Prostate gland (tissue), 2 donors: ENCODE measurements at regions of chr9 and their contacts with region 1.

Region 1: DNA sequence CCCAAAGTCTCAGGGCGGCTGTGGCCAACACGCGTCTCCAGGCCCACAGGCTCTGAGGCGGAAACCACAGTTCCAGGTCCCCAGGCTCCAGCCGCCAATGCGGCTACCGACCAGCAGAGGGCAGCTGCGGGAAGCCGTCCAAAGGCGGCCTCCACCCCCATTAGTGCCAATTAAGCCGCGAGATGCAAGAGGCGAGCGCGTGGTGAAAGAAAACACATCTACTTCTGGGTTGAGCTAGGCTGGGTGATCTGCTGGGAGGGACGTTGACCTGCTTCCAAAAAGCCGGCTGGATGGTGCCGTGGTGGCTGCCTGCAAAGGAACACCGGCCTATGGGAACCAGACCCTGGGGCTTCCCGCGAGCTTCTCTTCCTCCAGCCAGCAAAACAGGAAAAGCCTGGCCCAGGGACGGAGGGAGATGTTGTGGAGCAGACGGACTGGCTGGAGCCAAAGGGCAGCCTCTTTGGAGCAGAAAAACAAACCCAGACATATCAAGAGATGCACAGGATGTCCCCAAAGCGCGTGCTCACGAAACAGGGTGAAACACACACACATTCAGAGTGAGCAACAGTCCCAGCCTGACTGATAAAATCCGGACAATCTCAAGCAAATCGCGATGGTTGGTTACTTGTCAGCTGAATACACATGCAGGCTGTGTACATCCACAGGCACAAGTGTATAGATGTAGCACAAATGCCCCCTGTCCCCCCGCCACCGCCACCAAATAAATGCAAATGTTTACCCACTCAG is 187.1 kb upstream of the BRINP1 start:
- DNase-seq: peak; percentile 50
- H3K4me3 ChIP-seq: peak overlapping the region in 1 of 2 donors; percentile 21
- H3K27ac ChIP-seq: peak overlapping the region; percentile 13 to 17
- H3K4me1 ChIP-seq: peaks cover 5% of the 10 kb centered on the region
- H3K27me3 ChIP-seq: no peaks in the 10 kb centered on the region
- CTCF ChIP-seq: peak; percentile 82 to 88 (median 84)
- POLR2A ChIP-seq: no peak

Region 2: DNA sequence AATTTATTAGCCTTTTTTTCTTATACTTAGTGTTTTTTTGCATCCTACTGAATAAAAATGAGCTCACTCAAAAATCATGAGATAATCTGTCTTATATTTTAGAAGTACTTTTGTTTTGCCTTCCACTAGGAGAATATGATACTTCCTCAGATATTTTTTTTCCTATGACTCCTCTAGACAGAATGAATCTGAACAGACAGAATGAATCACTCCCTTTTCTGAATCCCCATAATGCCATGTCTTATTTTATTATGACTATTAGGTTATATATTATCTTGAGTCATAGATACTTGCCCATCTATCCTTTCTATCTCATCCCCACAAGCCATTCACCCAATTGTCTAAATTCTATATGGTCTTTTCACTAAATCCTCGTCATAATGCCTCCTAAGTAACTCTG is 321.7 kb before region 1 on chr9:
- intact Hi-C with region 1: no loop called
- DNase-seq: no peak
- H3K4me3 ChIP-seq: no peak overlapping the region
- H3K27ac ChIP-seq: no peak overlapping the region
- H3K4me1 ChIP-seq: no peaks in the 10 kb centered on the region
- H3K27me3 ChIP-seq: no peaks in the 10 kb centered on the region
- CTCF ChIP-seq: no peak
- POLR2A ChIP-seq: no peak

Region 3: DNA sequence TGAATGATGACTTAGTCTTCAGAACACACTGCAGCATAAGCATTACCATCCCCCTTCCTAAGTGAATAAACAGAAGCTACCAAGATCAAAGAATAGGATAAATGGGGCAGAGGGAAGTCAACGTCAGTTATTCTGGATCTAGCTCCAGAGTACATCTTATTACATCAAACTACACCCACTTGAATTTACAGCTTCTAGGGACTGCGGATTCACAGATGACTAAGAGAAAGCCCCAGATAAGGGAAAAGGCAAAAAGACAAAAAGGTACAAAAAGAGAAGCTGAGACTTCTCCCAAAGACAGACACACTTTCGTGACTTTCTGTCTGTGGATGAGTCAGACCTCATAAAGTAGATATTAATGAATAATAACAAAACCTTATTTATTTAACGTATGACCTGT is 270.8 kb after region 1 on chr9:
- intact Hi-C with region 1: loop called (anchors 10 kb)
- DNase-seq: no peak
- H3K4me3 ChIP-seq: no peak overlapping the region
- H3K27ac ChIP-seq: no peak overlapping the region
- H3K4me1 ChIP-seq: no peaks in the 10 kb centered on the region
- H3K27me3 ChIP-seq: no peaks in the 10 kb centered on the region
- CTCF ChIP-seq: no peak
- POLR2A ChIP-seq: no peak

Region 4: DNA sequence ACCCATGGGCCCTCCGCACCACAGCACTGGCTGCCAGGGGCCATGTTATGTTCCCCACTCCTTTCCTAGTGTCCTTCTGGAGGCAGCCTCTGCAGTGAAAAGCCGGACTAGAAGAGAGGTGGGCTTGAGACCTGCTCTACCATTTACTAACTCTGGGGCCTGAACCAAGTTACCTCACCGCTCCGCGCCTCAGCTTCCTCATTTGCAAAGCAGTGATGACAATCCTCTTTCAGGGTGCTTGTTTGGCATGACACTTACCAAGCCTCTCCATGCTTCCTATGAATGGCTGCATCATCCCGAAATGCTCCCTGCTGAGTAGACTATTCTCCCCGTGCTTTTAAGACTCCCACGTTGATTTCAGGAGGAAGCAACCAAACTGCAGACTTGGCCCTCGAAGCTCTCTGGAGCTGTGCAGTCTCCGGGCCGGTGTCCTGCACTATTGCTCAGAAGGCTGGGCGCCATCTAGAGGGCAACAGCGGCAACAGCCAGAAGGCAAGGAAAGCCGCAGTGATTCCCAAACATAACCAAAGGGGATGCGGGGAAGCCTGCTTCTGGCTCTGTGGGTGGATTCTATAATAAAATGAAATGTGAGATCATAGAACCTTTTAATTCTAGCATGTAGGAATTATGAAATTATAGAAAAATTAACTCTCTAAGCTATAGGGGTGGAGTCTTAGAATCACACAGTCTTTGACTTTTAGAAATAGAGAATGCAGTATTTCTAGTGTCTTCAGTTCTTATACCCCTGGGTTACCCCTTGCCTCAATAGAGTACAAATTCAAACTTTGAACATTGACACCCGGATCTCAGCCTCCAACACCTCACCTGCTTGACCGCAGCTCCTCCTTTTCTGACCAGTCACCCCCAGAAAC is 412.8 kb after region 1 on chr9:
- intact Hi-C with region 1: loop called (anchors 2 kb)
- DNase-seq: peak; percentile 75
- H3K4me3 ChIP-seq: no peak overlapping the region
- H3K27ac ChIP-seq: no peak overlapping the region
- H3K4me1 ChIP-seq: peaks cover 5% of the 10 kb centered on the region
- H3K27me3 ChIP-seq: no peaks in the 10 kb centered on the region
- CTCF ChIP-seq: peak; percentile 74 to 84 (median 80)
- POLR2A ChIP-seq: no peak

Region 5: DNA sequence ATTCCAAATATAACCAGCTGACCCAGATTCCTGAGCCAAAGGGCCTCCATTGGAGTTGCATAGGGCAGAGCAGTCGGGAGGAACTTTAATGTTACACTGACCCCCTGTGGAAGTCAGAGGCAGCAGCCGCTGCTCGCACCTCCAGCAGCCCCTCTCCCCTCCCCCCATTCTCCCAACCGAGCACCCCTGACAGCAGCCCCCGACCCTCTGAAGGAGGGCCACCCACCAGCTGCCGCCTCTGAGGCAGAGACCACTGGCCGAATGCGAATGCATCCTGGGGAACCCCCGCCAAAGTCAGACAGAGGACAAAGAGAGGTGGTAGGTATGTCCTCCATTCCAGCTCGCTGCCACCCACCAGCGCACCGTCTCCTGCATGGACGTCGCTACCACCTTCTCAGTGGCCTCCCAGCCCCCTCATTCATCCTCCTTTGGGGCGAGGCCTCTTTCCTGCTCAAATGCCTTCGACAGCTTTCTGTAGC is 792.7 kb after region 1 on chr9:
- intact Hi-C with region 1: loop called (anchors 10 kb)
- DNase-seq: peak; percentile 11
- H3K4me3 ChIP-seq: no peak overlapping the region
- H3K27ac ChIP-seq: no peak overlapping the region
- H3K4me1 ChIP-seq: peaks cover 7% of the 10 kb centered on the region
- H3K27me3 ChIP-seq: no peaks in the 10 kb centered on the region
- CTCF ChIP-seq: peak in 3 of 4 experiments; percentile 47 to 62 (median 58)
- POLR2A ChIP-seq: no peak

Region 6: DNA sequence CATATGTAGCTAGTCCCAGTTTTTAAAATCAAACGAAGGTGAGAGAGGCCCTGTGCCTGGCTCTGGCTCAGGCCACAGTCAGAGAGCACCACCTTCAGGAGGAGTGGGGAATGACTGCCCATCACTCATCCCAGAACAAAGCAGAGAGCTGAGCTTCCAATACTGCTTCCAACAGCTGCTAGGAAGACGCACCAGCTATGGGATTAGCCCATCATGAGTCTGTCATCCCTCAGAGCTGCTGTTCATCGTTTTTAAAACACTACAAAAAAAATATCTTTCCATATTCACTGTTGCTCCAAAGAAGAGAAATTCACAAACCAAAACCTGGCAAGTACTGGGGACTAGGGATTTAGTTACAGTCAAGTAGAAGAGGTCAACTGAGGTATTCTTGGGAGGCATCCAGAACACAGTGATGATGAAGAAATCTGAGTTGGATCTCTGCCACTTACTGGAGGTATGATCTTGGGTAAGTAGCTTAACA is 921.3 kb after region 1 on chr9:
- intact Hi-C with region 1: loop called (anchors 5 kb)
- DNase-seq: peak; percentile 35
- H3K4me3 ChIP-seq: no peak overlapping the region
- H3K27ac ChIP-seq: no peak overlapping the region
- H3K4me1 ChIP-seq: no peaks in the 10 kb centered on the region
- H3K27me3 ChIP-seq: no peaks in the 10 kb centered on the region
- CTCF ChIP-seq: peak; percentile 59 to 87 (median 76)
- POLR2A ChIP-seq: no peak